ENCODE measurements at regions of chr6 and their contacts with region 1.

Region 1: GRCh38 chr6:152271776-152272464 is 365.2 kb downstream of the SYNE1 start:
- DNase-seq: no peak
- ATAC-seq: peak in 2 of 4 donors; percentile 41 to 50
- H3K4me3 ChIP-seq: no peak overlapping the region
- H3K27ac ChIP-seq: no peak overlapping the region
- H3K4me1 ChIP-seq: no peaks in the 10 kb centered on the region
- H3K27me3 ChIP-seq: no peaks in the 10 kb centered on the region
- CTCF ChIP-seq: no peak
- POLR2A ChIP-seq: no peak

Region 2: GRCh38 chr6:151835225-151835795 is 436.6 kb before region 1 on chr6:
- intact Hi-C with region 1: no loop called
- DNase-seq: no peak
- ATAC-seq: peak in 3 of 4 donors; percentile 26 to 49 (median 33)
- H3K4me3 ChIP-seq: no peak overlapping the region
- H3K27ac ChIP-seq: no peak overlapping the region
- H3K4me1 ChIP-seq: no peaks in the 10 kb centered on the region
- H3K27me3 ChIP-seq: no peaks in the 10 kb centered on the region
- CTCF ChIP-seq: no peak
- POLR2A ChIP-seq: no peak

Region 3: GRCh38 chr6:152206072-152206818 is 65.7 kb before region 1 on chr6:
- intact Hi-C with region 1: no loop called
- DNase-seq: peak in 2 of 3 donors; percentile 25 to 52
- ATAC-seq: peak in 2 of 4 donors; percentile 40 to 51
- H3K4me3 ChIP-seq: no peak overlapping the region
- H3K27ac ChIP-seq: no peak overlapping the region
- H3K4me1 ChIP-seq: no peaks in the 10 kb centered on the region
- H3K27me3 ChIP-seq: no peaks in the 10 kb centered on the region
- CTCF ChIP-seq: peak; percentile 9 to 47 (median 36)
- POLR2A ChIP-seq: no peak

Region 4: DNA sequence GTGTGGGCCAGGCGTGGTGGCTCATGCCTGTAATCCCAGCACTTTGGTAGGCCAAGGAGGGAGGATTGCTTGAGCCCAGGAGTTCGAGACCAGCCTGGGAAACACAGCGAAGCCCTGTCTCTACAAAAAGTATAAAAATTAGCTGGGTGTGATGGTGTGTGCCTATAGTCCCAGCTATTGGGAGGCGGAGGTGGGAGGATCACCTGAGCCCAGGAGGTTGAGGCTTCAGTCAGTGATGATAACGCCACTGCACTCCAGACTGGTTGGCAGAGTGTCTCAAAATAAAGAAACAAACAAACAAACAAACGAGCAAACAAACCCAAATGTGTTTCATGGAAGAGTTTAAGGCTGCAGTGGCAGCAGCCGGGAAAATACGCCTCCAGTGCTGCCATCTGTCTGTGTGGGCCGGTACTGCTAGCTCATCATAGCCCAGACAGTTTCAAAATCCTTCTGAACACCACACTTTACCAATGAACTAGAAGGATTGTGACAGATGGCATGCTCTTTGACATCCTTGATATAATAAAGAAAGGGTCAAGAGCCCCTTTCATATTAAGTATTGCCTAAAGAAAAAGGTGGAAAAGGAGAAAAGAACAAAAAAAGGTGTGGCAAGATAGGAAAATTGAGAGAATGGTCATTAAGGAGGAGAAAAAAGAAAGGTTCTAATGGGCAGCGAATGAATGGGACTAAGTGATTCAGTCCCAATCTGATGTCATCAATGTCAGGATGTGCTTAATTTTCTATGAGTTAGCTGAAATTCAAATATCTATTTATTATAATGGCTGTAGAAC is 66.6 kb after region 1 on chr6:
- intact Hi-C with region 1: loop called in 1 of 2 experiments (anchors 10 kb)
- DNase-seq: peak; percentile 42 to 63 (median 62)
- ATAC-seq: peak; percentile 99 to 100 (median 100)
- H3K4me3 ChIP-seq: no peak overlapping the region
- H3K27ac ChIP-seq: no peak overlapping the region
- H3K4me1 ChIP-seq: no peaks in the 10 kb centered on the region
- H3K27me3 ChIP-seq: no peaks in the 10 kb centered on the region
- CTCF ChIP-seq: peak; percentile 86 to 95 (median 93)
- POLR2A ChIP-seq: no peak

Region 5: GRCh38 chr6:152441902-152442301 is 170.0 kb after region 1 on chr6:
- intact Hi-C with region 1: no loop called
- DNase-seq: peak in 1 of 3 donors; percentile 50
- ATAC-seq: no peak
- H3K4me3 ChIP-seq: no peak overlapping the region
- H3K27ac ChIP-seq: no peak overlapping the region
- H3K4me1 ChIP-seq: no peaks in the 10 kb centered on the region
- H3K27me3 ChIP-seq: no peaks in the 10 kb centered on the region
- CTCF ChIP-seq: no peak
- POLR2A ChIP-seq: no peak